ENCODE measurements at regions of chr21 and their contacts with region 1.

Region 1: GRCh38 chr21:30340441-30341241 is 3.1 kb upstream of the KRTAP27-1 start:
- DNase-seq: no peak
- ATAC-seq: no peak
- H3K4me3 ChIP-seq: no peak overlapping the region
- H3K27ac ChIP-seq: no peak overlapping the region
- H3K4me1 ChIP-seq: no peaks in the 10 kb centered on the region
- H3K27me3 ChIP-seq: no peaks in the 10 kb centered on the region
- CTCF ChIP-seq: peak; percentile 51 to 68 (median 51)
- EP300 ChIP-seq: no peak
- POLR2A ChIP-seq: no peak
- RAD21 ChIP-seq: peak; percentile 48

Region 2: GRCh38 chr21:30268608-30269240 is 71.9 kb before region 1 on chr21:
- CTCF ChIA-PET with region 1: no interaction called
- POLR2A ChIA-PET with region 1: no interaction called
- RAD21 ChIA-PET with region 1: no interaction called
- SMC1A ChIA-PET with region 1: no interaction called
- in situ Hi-C with region 1: no loop called
- intact Hi-C with region 1: no loop called
- DNase-seq: no peak
- ATAC-seq: peak; percentile 32; the same call in 1 of the 3 replicates
- H3K4me3 ChIP-seq: no peak overlapping the region
- H3K27ac ChIP-seq: no peak overlapping the region
- H3K4me1 ChIP-seq: no peaks in the 10 kb centered on the region
- H3K27me3 ChIP-seq: no peaks in the 10 kb centered on the region
- CTCF ChIP-seq: peak in 1 of 3 experiments; percentile 29; a peak in 2 of 6 replicates
- EP300 ChIP-seq: no peak
- POLR2A ChIP-seq: no peak
- RAD21 ChIP-seq: no peak

Region 3: DNA sequence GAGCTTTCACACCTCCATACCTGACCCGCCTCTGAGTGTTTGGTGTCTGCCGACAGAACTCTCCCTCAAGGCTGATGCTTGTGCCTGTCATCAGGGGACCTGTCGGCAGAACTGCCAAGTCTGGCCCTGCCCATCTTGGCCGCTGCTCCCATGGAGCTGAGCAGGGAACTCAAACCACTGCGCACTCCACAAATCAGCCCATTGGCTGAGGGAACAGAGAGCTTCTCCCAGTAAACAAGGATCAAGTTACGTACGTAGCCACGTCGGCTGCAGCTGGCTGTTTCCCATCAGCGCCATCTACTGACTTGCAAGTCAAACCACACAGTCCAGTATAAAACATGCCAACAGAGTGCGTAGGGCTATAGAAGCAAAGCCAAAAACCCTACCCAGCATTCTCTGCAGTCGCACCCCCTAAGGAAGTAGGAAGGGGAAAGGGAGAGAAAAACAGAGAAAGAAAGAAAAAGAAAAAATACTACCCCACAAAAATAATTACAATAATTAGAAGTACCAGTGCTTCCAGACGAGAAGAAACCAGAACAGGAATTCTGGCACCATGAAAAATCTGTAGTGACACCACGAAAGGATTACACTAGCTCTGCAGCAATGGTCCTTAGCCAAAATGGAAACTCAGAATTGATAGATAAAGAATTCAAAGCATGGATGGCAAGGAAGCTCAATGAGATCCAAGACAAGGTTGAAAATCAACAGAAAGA is 68.3 kb after region 1 on chr21:
- CTCF ChIA-PET with region 1: interaction called, 3 read pairs
- POLR2A ChIA-PET with region 1: no interaction called
- RAD21 ChIA-PET with region 1: no interaction called
- SMC1A ChIA-PET with region 1: no interaction called
- in situ Hi-C with region 1: no loop called
- intact Hi-C with region 1: loop called (anchors 1 kb)
- DNase-seq: no peak
- ATAC-seq: peak; percentile 70
- H3K4me3 ChIP-seq: no peak overlapping the region
- H3K27ac ChIP-seq: no peak overlapping the region
- H3K4me1 ChIP-seq: no peaks in the 10 kb centered on the region
- H3K27me3 ChIP-seq: no peaks in the 10 kb centered on the region
- CTCF ChIP-seq: no peak; a peak in 1 of 6 replicates
- EP300 ChIP-seq: no peak
- POLR2A ChIP-seq: no peak
- RAD21 ChIP-seq: no peak

Region 4: GRCh38 chr21:30434033-30434631 is 93.5 kb after region 1 on chr21:
- CTCF ChIA-PET with region 1: no interaction called
- POLR2A ChIA-PET with region 1: no interaction called
- RAD21 ChIA-PET with region 1: no interaction called
- SMC1A ChIA-PET with region 1: interaction called, 5 read pairs
- in situ Hi-C with region 1: no loop called
- intact Hi-C with region 1: loop called (anchors 5 kb)
- DNase-seq: no peak
- ATAC-seq: peak; percentile 72
- H3K4me3 ChIP-seq: no peak overlapping the region
- H3K27ac ChIP-seq: no peak overlapping the region
- H3K4me1 ChIP-seq: no peaks in the 10 kb centered on the region
- H3K27me3 ChIP-seq: no peaks in the 10 kb centered on the region
- CTCF ChIP-seq: peak; percentile 36 to 41 (median 41); a peak in 5 of 6 replicates
- EP300 ChIP-seq: no peak
- POLR2A ChIP-seq: no peak
- RAD21 ChIP-seq: no peak

Region 5: DNA sequence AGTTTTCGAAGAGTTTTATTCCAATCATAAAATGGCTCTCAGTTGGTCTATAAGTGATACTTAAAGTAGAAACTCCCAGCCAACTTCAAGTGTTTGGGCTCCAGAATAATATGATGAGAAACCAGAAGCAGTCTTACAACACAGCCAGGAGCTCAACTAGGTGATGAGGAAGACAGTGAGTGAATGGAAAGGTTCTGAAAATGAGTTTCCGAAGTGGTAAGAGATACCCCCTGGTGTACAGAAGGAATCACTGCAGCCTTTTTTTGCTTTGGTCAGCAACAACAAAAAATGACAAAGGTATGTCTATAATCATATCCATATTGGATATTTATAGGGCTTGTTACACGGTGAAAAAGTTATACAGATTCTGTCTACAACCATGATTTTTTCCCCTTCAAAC is 123.1 kb after region 1 on chr21:
- CTCF ChIA-PET with region 1: interaction called, 3 read pairs
- POLR2A ChIA-PET with region 1: no interaction called
- RAD21 ChIA-PET with region 1: no interaction called
- SMC1A ChIA-PET with region 1: no interaction called
- in situ Hi-C with region 1: no loop called
- intact Hi-C with region 1: loop called (anchors 2 kb)
- DNase-seq: no peak
- ATAC-seq: peak; percentile 22; the same call in 2 of the 3 replicates
- H3K4me3 ChIP-seq: no peak overlapping the region
- H3K27ac ChIP-seq: no peak overlapping the region
- H3K4me1 ChIP-seq: no peaks in the 10 kb centered on the region
- H3K27me3 ChIP-seq: no peaks in the 10 kb centered on the region
- CTCF ChIP-seq: peak; percentile 29 to 39 (median 37); a peak in 3 of 6 replicates
- EP300 ChIP-seq: no peak
- POLR2A ChIP-seq: no peak
- RAD21 ChIP-seq: no peak

Region 6: GRCh38 chr21:31604591-31605190 is 1264.0 kb after region 1 on chr21:
- CTCF ChIA-PET with region 1: no interaction called
- POLR2A ChIA-PET with region 1: no interaction called
- RAD21 ChIA-PET with region 1: no interaction called
- SMC1A ChIA-PET with region 1: no interaction called
- in situ Hi-C with region 1: loop called (anchors 10 kb)
- intact Hi-C with region 1: no loop called
- DNase-seq: peak; percentile 19
- ATAC-seq: peak; percentile 94
- H3K4me3 ChIP-seq: no peak overlapping the region
- H3K27ac ChIP-seq: no peak overlapping the region
- H3K4me1 ChIP-seq: no peaks in the 10 kb centered on the region
- H3K27me3 ChIP-seq: no peaks in the 10 kb centered on the region
- CTCF ChIP-seq: peak; percentile 74 to 87 (median 85)
- EP300 ChIP-seq: no peak
- POLR2A ChIP-seq: no peak
- RAD21 ChIP-seq: peak; percentile 87